CD8-positive, alpha-beta T cell (primary cell): ENCODE measurements at regions of chr20 and their contacts with region 1.

Region 1: GRCh38 chr20:62808211-62808865 is 3.7 kb downstream of the OGFR start:
- DNase-seq: peak; percentile 58 to 87 (median 78)
- ATAC-seq: peak; percentile 49
- H3K4me3 ChIP-seq: no peak overlapping the region
- H3K4me3 Mint-ChIP-seq: peak overlapping the region; percentile 50
- H3K27ac ChIP-seq: no peak overlapping the region
- H3K27ac Mint-ChIP-seq: peak overlapping the region; percentile 60
- H3K4me1 ChIP-seq: peaks cover 37% of the 10 kb centered on the region
- H3K4me1 Mint-ChIP-seq: peaks cover 29% of the 10 kb centered on the region
- H3K27me3 ChIP-seq: no peaks in the 10 kb centered on the region
- H3K27me3 Mint-ChIP-seq: no peaks in the 10 kb centered on the region
- CTCF ChIP-seq: peak; percentile 95

Region 2: DNA sequence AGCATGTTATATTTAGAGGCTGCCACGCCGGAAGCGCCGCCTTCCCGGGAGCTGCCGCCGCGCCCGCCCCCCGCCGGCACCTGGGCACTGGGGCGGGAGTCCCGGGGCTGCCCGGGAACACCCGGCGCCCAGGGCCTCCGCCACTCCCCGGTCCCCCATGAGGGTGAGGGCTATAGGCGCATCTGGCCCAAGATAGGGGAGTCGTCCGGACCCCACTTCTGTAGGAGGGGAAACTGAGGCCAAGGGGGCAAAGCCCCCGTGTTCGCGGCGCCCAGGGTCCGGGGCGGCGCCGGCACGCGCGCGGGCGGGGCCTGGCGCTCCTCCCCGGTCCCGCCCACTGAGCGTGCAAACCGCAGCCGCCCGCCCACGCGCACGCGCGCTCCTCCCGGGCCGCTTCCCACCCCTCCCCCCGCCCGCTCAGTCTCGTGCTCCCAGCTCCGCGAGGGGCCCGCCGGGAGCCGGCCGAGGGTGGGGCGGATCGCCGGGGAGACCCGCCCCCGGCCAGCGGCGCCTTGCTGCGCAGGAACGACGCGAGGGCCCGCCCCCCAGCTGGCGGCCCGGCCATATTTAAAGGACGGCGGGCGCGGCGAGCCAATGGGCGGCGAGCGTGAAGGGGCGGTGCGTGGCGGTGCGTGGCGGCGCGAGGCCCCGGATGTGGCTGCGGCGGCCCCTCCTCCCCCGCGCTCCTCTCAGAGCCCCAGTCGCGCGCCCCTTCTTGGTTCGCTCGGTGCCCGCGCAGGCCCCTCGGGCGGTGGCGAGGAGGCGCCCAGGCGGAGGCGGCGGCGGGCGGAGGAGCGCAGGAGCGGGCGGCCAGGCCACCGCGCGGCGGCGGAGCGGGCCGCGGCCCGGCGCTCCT is 686.3 kb before region 1 on chr20 and contains the start of gene LSM14B:
- CTCF ChIA-PET with region 1: no interaction called
- POLR2A ChIA-PET with region 1: no interaction called
- intact Hi-C with region 1: loop called in 1 of 2 experiments (anchors 10 kb)
- DNase-seq: peak; percentile 92 to 99 (median 94)
- ATAC-seq: peak; percentile 76
- H3K4me3 ChIP-seq: peak within 1 kb of the TSS; percentile 55 to 86
- H3K4me3 Mint-ChIP-seq: peak within 1 kb of the TSS; percentile 85
- H3K27ac ChIP-seq: peak within 1 kb of the TSS; percentile 78 to 83
- H3K27ac Mint-ChIP-seq: peak within 1 kb of the TSS; percentile 90
- H3K4me1 ChIP-seq: peaks cover 57% of the 10 kb centered on the region
- H3K4me1 Mint-ChIP-seq: peaks cover 62% of the 10 kb centered on the region
- H3K27me3 ChIP-seq: no peaks in the 10 kb centered on the region
- H3K27me3 Mint-ChIP-seq: no peaks in the 10 kb centered on the region
- CTCF ChIP-seq: no peak
- total RNA-seq, gene LSM14B: 58.2 to 64.6 TPM

Region 3: GRCh38 chr20:62500237-62500864 is 308.0 kb before region 1 on chr20:
- CTCF ChIA-PET with region 1: interaction called, 18 read pairs
- POLR2A ChIA-PET with region 1: no interaction called
- intact Hi-C with region 1: loop called in 1 of 2 experiments (anchors 1 kb)
- DNase-seq: peak; percentile 62 to 88 (median 82)
- ATAC-seq: peak; percentile 64
- H3K4me3 ChIP-seq: no peak overlapping the region
- H3K4me3 Mint-ChIP-seq: no peak overlapping the region
- H3K27ac ChIP-seq: no peak overlapping the region
- H3K27ac Mint-ChIP-seq: no peak overlapping the region
- H3K4me1 ChIP-seq: peaks cover 7% of the 10 kb centered on the region
- H3K4me1 Mint-ChIP-seq: peaks cover 11% of the 10 kb centered on the region
- H3K27me3 ChIP-seq: no peaks in the 10 kb centered on the region
- H3K27me3 Mint-ChIP-seq: peaks cover 2% of the 10 kb centered on the region
- CTCF ChIP-seq: peak; percentile 76

Region 4: GRCh38 chr20:62668441-62669027 is 139.8 kb before region 1 on chr20:
- CTCF ChIA-PET with region 1: interaction called, 13 read pairs
- POLR2A ChIA-PET with region 1: no interaction called
- intact Hi-C with region 1: loop called (anchors 1 kb)
- DNase-seq: peak in 7 of 9 experiments; percentile 11 to 67 (median 49)
- ATAC-seq: peak; percentile 53
- H3K4me3 ChIP-seq: no peak overlapping the region
- H3K4me3 Mint-ChIP-seq: no peak overlapping the region
- H3K27ac ChIP-seq: no peak overlapping the region
- H3K27ac Mint-ChIP-seq: no peak overlapping the region
- H3K4me1 ChIP-seq: no peaks in the 10 kb centered on the region
- H3K4me1 Mint-ChIP-seq: no peaks in the 10 kb centered on the region
- H3K27me3 ChIP-seq: no peaks in the 10 kb centered on the region
- H3K27me3 Mint-ChIP-seq: no peaks in the 10 kb centered on the region
- CTCF ChIP-seq: peak; percentile 52

Region 5: GRCh38 chr20:62682912-62683517 is 125.3 kb before region 1 on chr20:
- CTCF ChIA-PET with region 1: no interaction called
- POLR2A ChIA-PET with region 1: no interaction called
- intact Hi-C with region 1: no loop called
- DNase-seq: no peak
- ATAC-seq: no peak
- H3K4me3 ChIP-seq: no peak overlapping the region
- H3K4me3 Mint-ChIP-seq: no peak overlapping the region
- H3K27ac ChIP-seq: no peak overlapping the region
- H3K27ac Mint-ChIP-seq: no peak overlapping the region
- H3K4me1 ChIP-seq: peaks cover 9% of the 10 kb centered on the region
- H3K4me1 Mint-ChIP-seq: peaks cover 6% of the 10 kb centered on the region
- H3K27me3 ChIP-seq: peaks cover 0 to 5% of the 10 kb centered on the region in 2 experiments
- H3K27me3 Mint-ChIP-seq: peaks cover 8% of the 10 kb centered on the region
- CTCF ChIP-seq: no peak

Region 6: DNA sequence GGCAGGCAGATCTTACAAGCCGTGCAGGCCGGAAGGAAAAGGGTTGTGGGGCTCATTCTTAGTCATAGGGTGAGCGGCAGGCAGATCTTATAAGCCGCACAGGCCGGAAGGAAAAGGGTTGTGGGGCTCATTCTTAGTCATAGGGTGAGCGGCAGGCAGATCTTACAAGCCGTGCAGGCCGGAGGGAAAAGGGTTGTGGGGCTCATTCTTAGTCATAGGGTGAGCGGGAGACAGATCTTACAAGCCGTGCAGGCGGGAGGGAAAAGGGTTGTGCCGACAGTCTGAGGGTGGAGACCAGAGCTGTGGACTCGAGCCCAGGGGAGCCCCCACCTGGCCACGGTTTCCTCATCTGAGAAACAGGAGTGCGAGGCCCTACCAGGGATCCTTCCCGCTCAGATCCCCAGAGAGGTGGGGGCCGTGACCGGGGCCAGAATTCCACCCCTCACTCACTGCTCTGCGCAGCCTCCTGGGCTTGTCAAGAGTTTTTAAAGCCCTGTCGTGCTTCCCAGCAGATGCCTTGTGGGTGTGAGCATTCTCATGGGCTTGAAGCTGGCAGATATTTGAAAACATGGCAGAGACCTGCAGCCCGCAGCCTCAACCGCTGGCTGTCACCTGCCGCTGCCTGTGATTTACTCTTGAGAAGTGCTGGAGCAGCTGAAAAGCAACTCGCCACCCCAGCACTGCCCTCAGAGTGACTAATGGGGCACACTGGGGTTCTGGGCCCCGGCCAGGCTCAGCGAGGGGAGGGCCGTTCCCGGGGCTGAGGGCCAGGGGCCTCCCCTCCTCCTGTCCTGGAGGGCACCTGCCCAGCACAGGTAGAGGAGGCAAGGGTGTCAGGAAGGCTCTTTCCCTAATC is 67.8 kb before region 1 on chr20:
- CTCF ChIA-PET with region 1: interaction called, 4 read pairs
- POLR2A ChIA-PET with region 1: interaction called, 6 read pairs
- intact Hi-C with region 1: loop called in 1 of 2 experiments (anchors 2 kb)
- DNase-seq: peak; percentile 55 to 93 (median 83)
- ATAC-seq: peak; percentile 80
- H3K4me3 ChIP-seq: peak overlapping the region; percentile 34 to 50
- H3K4me3 Mint-ChIP-seq: peak overlapping the region; percentile 74
- H3K27ac ChIP-seq: peak overlapping the region; percentile 72 to 87
- H3K27ac Mint-ChIP-seq: peak overlapping the region; percentile 88
- H3K4me1 ChIP-seq: peaks cover 47% of the 10 kb centered on the region
- H3K4me1 Mint-ChIP-seq: peaks cover 38% of the 10 kb centered on the region
- H3K27me3 ChIP-seq: no peaks in the 10 kb centered on the region
- H3K27me3 Mint-ChIP-seq: peaks cover 5% of the 10 kb centered on the region
- CTCF ChIP-seq: no peak

Region 7: DNA sequence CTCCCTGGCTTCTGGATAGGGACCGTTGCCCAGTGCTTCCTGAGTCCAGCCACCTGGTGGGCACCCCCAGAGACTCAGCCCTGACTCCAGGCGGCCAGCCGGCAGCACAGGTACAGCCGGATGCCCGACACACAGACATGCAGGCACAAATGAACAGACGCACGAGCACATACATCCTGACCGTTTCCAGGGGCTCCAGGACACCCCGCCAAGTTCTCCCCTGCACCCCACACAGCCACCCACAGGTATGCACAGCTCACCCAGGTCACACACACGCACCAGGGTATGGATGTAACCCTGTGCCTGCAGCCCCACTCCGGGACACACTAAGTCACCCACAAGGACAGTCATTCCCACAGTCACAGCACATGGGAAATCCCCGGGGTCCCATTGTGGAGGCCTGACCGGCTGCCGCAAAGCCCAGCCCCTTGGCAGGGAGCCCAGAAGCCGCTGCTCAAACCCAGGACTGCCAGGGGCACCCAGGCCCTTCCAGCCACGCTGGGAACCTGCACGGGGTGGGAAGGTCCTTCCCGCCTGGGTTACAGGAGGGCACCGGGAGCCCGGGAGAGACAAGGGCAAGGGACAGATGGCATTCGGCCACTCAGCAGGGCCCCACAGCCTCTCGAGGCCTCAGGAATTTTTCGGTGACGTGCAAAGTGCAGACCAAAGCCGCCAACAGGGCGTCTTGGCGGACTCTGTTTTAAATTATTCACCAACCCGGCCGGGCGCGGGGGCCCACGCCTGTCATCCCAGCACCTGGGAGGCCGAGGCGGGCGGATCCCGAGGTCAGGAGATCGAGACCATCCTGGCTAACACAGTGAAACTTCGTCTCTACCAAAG is 674.7 kb after region 1 on chr20:
- CTCF ChIA-PET with region 1: no interaction called
- POLR2A ChIA-PET with region 1: no interaction called
- intact Hi-C with region 1: no loop called
- DNase-seq: no peak
- ATAC-seq: no peak
- H3K4me3 ChIP-seq: no peak overlapping the region
- H3K4me3 Mint-ChIP-seq: no peak overlapping the region
- H3K27ac ChIP-seq: no peak overlapping the region
- H3K27ac Mint-ChIP-seq: no peak overlapping the region
- H3K4me1 ChIP-seq: no peaks in the 10 kb centered on the region
- H3K4me1 Mint-ChIP-seq: no peaks in the 10 kb centered on the region
- H3K27me3 ChIP-seq: peaks cover 0 to 9% of the 10 kb centered on the region in 2 experiments
- H3K27me3 Mint-ChIP-seq: peaks cover 25% of the 10 kb centered on the region
- CTCF ChIP-seq: no peak